ENCODE measurements at regions of chr11 and their contacts with region 1.

Region 1: GRCh38 chr11:13008625-13009475 is at the start of gene RASSF10:
- DNase-seq: peak; percentile 89 to 96
- ATAC-seq: peak; percentile 95 to 98
- H3K4me3 ChIP-seq: peak within 1 kb of the TSS; percentile 66
- H3K27ac ChIP-seq: peak within 1 kb of the TSS; percentile 65 to 90
- H3K4me1 ChIP-seq: peaks cover 48% of the 10 kb centered on the region
- CTCF ChIP-seq: no peak
- EP300 ChIP-seq: no peak
- POLR2A ChIP-seq: peak; percentile 97
- RAD21 ChIP-seq: 0 out of 5 replicates have a peak, but pooled peaks of 1 of the 2 experiments have one; percentile 8
- polyA plus RNA-seq, gene RASSF10: 2.4 and 3.9 TPM in 2 replicates

Region 2: GRCh38 chr11:12995188-12995587 is 13.7 kb before region 1 on chr11:
- CTCF ChIA-PET with region 1: interaction called, 10 read pairs
- POLR2A ChIA-PET with region 1: no interaction called
- DNase-seq: no peak
- ATAC-seq: no peak
- H3K4me3 ChIP-seq: no peak overlapping the region
- H3K27ac ChIP-seq: no peak overlapping the region
- H3K4me1 ChIP-seq: no peaks in the 10 kb centered on the region
- CTCF ChIP-seq: no peak
- EP300 ChIP-seq: no peak
- POLR2A ChIP-seq: no peak
- RAD21 ChIP-seq: no peak

Region 3: DNA sequence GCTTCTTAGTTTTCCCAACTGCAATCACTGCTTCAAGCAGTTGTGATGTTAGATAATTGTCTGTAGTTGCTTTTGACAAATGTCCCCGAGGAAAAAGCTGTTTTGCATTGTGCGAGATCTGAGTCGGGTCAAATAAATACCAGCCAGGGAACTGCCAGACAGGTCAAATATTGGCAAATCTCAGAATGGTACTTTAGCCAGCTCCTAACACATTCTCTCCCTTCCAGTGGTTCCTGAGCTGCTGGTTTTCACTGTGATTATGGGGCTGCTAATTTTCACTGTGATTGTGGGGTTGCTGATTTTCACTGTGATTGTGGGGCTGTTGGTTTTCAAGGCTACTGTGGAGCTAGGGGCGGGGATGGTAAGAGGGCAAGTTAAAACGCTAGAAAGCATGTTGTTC is 14.6 kb after region 1 on chr11:
- CTCF ChIA-PET with region 1: interaction called, 8 read pairs
- POLR2A ChIA-PET with region 1: interaction called, 11 read pairs
- DNase-seq: no peak
- ATAC-seq: no peak
- H3K4me3 ChIP-seq: no peak overlapping the region
- H3K27ac ChIP-seq: 0 out of 6 replicates have a peak overlapping the region, but pooled peaks of 1 of the 2 experiments have one; percentile 17
- H3K4me1 ChIP-seq: no peaks in the 10 kb centered on the region
- CTCF ChIP-seq: no peak
- EP300 ChIP-seq: no peak
- POLR2A ChIP-seq: no peak
- RAD21 ChIP-seq: no peak

Region 4: GRCh38 chr11:13152736-13153533 is 144.1 kb after region 1 on chr11:
- CTCF ChIA-PET with region 1: interaction called, 25 read pairs
- POLR2A ChIA-PET with region 1: interaction called, 5 read pairs
- DNase-seq: peak; percentile 34 to 44
- ATAC-seq: peak in 1 of 2 experiments; percentile 44; a peak in 2 of 6 replicates
- H3K4me3 ChIP-seq: no peak overlapping the region
- H3K27ac ChIP-seq: peak overlapping the region in 1 of 2 experiments; percentile 73; a peak in 4 of 6 replicates
- H3K4me1 ChIP-seq: peaks cover 17% of the 10 kb centered on the region; the same call in 2 of the 3 replicates
- CTCF ChIP-seq: peak; percentile 84
- EP300 ChIP-seq: no peak
- POLR2A ChIP-seq: no peak
- RAD21 ChIP-seq: peak; percentile 91 to 92